Left cardiac atrium (tissue), 4 donors: ENCODE measurements at regions of chr1 and their contacts with region 1.

Region 1: GRCh38 chr1:100459358-100460114 is 78.4 kb upstream of the GPR88 start:
- DNase-seq: peak; percentile 75
- ATAC-seq: peak; percentile 87 to 91

Region 2: DNA sequence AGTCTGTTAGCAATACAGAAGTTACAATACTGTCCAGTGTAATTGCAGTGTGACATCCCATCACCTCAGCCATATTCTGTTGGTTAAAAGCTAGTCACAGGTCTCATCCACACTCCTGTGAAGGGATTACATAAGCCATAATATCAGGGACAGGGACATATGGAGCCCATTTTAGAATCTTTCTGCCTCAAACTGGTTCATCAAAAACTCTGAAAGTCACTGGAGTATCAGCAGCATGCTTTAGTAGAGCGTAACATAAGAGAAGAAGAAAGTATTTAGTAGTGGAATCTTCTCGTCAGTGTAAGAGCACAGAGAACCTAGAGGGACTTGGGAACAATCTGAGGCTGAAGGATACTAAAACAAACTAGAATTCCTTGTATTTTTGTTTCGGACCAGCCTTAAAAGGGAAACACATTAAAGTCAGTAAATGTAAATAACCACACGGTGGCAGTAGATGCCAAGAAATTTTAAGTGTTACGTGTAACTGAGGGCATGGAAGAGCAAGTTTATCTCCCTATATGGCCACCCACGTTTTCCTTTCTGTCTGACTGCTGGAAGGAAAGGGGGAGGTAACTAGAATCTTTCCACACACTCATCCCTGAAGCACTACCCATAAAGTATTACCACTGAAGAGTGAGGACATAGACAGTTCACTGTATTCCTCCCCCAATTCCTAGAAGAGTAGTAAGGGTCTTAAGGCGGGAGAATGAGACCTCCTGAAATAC is 651.0 kb before region 1 on chr1:
- intact Hi-C with region 1: loop called (anchors 5 to 10 kb)
- DNase-seq: no peak
- ATAC-seq: peak; percentile 94 to 99

Region 3: GRCh38 chr1:99818063-99818699 is 641.4 kb before region 1 on chr1:
- intact Hi-C with region 1: loop called in 1 of 2 experiments (anchors 10 kb)
- DNase-seq: no peak
- ATAC-seq: peak; percentile 74 to 75

Region 4: GRCh38 chr1:100279954-100280682 is 179.4 kb before region 1 on chr1:
- intact Hi-C with region 1: loop called in 1 of 2 experiments (anchors 10 kb)
- DNase-seq: no peak
- ATAC-seq: peak; percentile 73 to 82

Region 5: GRCh38 chr1:100485855-100486258 is 26.3 kb after region 1 on chr1:
- intact Hi-C with region 1: no loop called
- DNase-seq: no peak
- ATAC-seq: no peak

Region 6: GRCh38 chr1:100606438-100606837 is 146.9 kb after region 1 on chr1:
- intact Hi-C with region 1: loop called in 1 of 2 experiments (anchors 10 kb)
- DNase-seq: peak; percentile 44
- ATAC-seq: peak; percentile 91 to 94

Region 7: DNA sequence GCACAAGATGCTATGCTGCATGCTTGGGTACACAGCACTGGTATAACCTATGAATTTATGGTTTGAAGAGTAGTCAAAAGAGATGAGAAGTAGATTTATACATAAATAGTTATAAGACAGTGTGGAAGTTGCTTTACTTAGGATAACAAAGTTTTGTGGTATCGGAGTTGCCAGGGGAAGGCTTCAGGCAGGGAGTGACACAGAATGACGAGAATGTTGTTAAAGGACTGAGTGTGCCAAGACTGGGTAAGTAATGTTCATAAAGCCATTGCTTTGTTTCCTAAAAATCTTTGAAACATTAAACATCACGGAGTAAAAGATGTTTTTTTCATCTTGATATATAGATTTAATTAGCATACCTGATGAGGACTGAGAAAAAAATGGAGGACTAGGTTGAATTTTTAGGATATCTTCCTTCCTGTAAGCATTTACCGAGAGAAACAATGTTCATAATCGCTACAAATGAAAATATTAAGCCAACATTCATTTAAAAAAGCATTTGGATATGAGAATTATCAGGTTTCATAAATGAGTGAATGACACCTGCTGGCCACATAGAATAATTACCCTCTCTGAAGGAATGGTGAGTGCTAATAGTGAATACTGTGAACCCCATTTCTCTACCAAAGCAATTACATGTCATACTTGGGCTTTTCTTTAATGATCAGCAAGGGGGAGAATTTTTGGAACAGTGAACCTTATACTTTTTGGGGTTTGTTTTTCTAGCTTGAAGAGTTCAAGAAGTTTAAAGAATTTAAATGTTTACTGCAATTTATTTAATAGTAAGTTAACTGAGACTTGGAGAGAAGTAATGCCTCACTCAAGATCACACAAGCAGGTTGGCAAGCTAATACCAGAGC is 406.7 kb after region 1 on chr1:
- intact Hi-C with region 1: loop called (anchors 2 to 5 kb)
- DNase-seq: no peak
- ATAC-seq: peak; percentile 62 to 70